CD8-positive, alpha-beta T cell (primary cell): ENCODE measurements at regions of chr21 and their contacts with region 1.

Region 1: DNA sequence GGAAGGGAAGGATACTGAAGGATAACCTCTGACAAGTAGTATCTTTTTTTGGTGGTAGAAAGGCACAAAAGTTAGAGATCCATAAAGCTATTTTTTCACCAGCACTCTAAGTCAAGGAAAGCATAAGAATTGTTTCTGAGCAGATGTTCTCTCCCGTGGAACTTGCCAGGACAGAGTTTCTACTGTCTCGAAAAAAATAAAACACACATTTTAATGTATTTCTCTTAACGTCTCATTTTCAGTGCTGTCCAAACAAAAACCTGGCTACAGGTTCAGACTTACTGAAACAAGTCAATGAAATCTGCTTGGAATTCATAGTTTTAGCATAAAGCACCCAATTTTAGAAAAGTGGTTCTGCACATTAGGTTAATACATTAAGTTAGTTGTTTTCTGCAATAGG is 338.3 kb downstream of the LTN1 start:
- DNase-seq: no peak
- ATAC-seq: no peak
- H3K4me3 ChIP-seq: no peak overlapping the region
- H3K4me3 Mint-ChIP-seq: no peak overlapping the region
- H3K27ac ChIP-seq: no peak overlapping the region
- H3K27ac Mint-ChIP-seq: no peak overlapping the region
- H3K4me1 ChIP-seq: no peaks in the 10 kb centered on the region
- H3K4me1 Mint-ChIP-seq: peaks cover 8% of the 10 kb centered on the region
- H3K27me3 ChIP-seq: no peaks in the 10 kb centered on the region
- H3K27me3 Mint-ChIP-seq: no peaks in the 10 kb centered on the region
- CTCF ChIP-seq: no peak

Region 2: DNA sequence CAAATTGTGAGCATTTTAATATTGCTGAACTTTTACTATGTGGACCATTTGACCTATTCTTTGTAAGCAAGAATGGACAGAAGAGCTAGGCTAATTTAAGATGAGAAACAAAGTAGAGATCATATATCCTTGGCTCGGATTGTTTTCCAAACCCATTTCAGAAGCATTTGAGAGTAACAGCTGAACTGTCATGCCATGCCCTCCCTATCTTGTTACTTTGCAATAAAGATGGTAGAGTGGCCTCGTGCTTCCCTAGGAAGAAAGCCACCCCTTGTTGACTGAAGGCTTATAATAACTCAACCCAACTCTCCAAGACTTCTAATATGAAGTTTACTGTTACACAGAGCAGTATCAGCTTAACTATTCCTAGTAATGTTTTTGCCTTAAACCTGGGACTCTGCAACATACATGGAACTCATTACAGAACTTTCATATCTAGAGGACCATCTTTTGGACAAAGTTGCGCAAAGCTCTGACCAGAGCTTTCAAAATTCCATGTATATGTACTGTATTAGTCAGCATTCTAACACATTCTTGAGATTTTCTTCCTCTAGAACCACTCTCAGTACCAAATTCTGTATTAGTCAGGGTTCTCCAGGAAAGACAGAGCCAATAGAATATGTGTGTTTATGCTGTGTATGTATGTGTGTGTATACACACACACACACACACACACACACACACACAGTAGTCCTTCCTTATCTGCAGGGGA is 1877.9 kb before region 1 on chr21:
- CTCF ChIA-PET with region 1: no interaction called
- POLR2A ChIA-PET with region 1: no interaction called
- intact Hi-C with region 1: loop called in 1 of 2 experiments (anchors 5 kb)
- DNase-seq: no peak
- ATAC-seq: no peak
- H3K4me3 ChIP-seq: no peak overlapping the region
- H3K4me3 Mint-ChIP-seq: no peak overlapping the region
- H3K27ac ChIP-seq: no peak overlapping the region
- H3K27ac Mint-ChIP-seq: no peak overlapping the region
- H3K4me1 ChIP-seq: no peaks in the 10 kb centered on the region
- H3K4me1 Mint-ChIP-seq: no peaks in the 10 kb centered on the region
- H3K27me3 ChIP-seq: no peaks in the 10 kb centered on the region
- H3K27me3 Mint-ChIP-seq: no peaks in the 10 kb centered on the region
- CTCF ChIP-seq: no peak

Region 3: DNA sequence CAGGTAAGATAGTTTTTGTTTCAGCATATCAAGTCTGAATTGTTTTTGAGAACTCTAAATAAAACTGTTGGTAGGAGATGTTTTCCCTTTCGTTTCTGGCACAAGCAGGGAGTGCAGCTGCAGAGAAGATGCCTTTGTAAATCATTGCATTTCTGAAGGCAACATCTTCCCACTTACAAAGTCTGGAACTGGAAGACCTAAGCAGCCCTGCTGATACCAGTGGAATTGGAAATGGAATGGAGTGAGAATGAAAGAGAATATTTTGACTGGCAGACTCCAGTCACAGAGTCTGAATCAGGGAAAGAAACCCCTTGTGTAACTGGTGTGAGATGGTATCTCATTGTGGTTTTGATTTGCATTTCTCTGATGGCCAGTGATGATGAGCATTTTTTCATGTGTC is 477.3 kb before region 1 on chr21:
- CTCF ChIA-PET with region 1: no interaction called
- POLR2A ChIA-PET with region 1: no interaction called
- intact Hi-C with region 1: no loop called
- DNase-seq: no peak
- ATAC-seq: no peak
- H3K4me3 ChIP-seq: no peak overlapping the region
- H3K4me3 Mint-ChIP-seq: no peak overlapping the region
- H3K27ac ChIP-seq: no peak overlapping the region
- H3K27ac Mint-ChIP-seq: no peak overlapping the region
- H3K4me1 ChIP-seq: no peaks in the 10 kb centered on the region
- H3K4me1 Mint-ChIP-seq: no peaks in the 10 kb centered on the region
- H3K27me3 ChIP-seq: no peaks in the 10 kb centered on the region
- H3K27me3 Mint-ChIP-seq: no peaks in the 10 kb centered on the region
- CTCF ChIP-seq: no peak

Region 4: DNA sequence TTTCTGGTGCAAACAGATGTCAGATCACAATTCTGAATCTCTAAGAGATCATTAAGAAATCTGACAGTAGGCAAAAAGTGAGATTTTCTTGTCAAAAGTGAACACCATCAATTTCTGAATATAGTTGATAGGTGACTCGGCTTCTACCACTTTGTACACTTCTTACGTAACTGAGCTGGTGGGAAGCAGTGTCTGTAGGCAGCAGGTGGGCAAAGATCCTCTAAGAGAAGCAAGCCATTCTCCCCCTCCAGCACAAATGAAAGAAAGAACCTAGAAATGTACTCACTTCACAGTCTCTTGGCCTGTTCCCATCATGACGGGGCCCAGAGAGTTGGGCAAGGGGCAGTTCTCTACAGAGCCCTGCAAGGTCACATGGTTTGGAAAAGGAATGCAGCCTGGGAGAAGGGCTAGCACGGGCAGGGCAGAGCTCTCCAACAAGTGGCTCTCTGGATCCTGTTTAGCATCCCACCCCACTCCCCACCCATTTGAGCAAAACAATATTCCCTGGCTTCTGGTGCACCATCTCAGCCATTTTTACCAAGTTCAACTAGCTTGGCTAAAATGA is 74.3 kb before region 1 on chr21:
- CTCF ChIA-PET with region 1: no interaction called
- POLR2A ChIA-PET with region 1: no interaction called
- intact Hi-C with region 1: no loop called
- DNase-seq: no peak
- ATAC-seq: no peak
- H3K4me3 ChIP-seq: no peak overlapping the region
- H3K4me3 Mint-ChIP-seq: no peak overlapping the region
- H3K27ac ChIP-seq: no peak overlapping the region
- H3K27ac Mint-ChIP-seq: no peak overlapping the region
- H3K4me1 ChIP-seq: no peaks in the 10 kb centered on the region
- H3K4me1 Mint-ChIP-seq: peaks cover 1% of the 10 kb centered on the region
- H3K27me3 ChIP-seq: no peaks in the 10 kb centered on the region
- H3K27me3 Mint-ChIP-seq: no peaks in the 10 kb centered on the region
- CTCF ChIP-seq: no peak

Region 5: GRCh38 chr21:28687571-28687970 is 33.2 kb after region 1 on chr21:
- CTCF ChIA-PET with region 1: no interaction called
- POLR2A ChIA-PET with region 1: no interaction called
- intact Hi-C with region 1: no loop called
- DNase-seq: no peak
- ATAC-seq: no peak
- H3K4me3 ChIP-seq: no peak overlapping the region
- H3K4me3 Mint-ChIP-seq: no peak overlapping the region
- H3K27ac ChIP-seq: no peak overlapping the region
- H3K27ac Mint-ChIP-seq: no peak overlapping the region
- H3K4me1 ChIP-seq: no peaks in the 10 kb centered on the region
- H3K4me1 Mint-ChIP-seq: no peaks in the 10 kb centered on the region
- H3K27me3 ChIP-seq: no peaks in the 10 kb centered on the region
- H3K27me3 Mint-ChIP-seq: no peaks in the 10 kb centered on the region
- CTCF ChIP-seq: no peak